Colonic mucosa (tissue), 4 donors: ENCODE measurements at regions of chr1 and their contacts with region 1.

Region 1: DNA sequence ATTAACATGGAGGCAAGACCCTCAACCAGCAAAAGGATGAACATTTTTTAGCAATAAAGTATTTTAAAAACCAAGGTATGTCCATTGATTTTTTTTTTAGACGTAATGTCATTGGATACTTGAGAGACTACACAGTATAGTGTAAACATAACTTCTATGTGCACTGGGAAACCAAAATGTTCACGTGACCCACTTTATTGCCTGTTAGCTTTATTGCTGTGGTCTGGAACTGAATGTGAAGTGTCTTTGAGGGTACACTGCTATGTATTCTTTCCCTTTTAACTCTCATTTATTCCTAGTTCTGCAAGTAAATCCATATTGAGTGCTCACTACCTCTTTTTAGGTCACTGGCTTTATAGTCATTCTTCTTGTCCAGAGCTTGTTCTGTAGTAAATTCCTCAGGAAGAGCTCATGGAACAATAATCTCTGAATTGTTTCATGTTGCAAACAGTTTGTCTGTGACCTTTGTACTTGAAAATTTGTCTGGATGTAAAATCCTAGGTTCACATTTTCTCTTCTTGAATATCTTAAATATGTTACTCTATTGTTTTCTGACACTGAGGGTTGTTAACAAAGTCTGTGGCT is 20.6 kb downstream of the ABCD3 start:
- DNase-seq: peak; percentile 62
- H3K4me3 ChIP-seq: no peak overlapping the region
- H3K27ac ChIP-seq: peak overlapping the region; percentile 35
- H3K4me1 ChIP-seq: peaks cover 8% of the 10 kb centered on the region
- H3K27me3 ChIP-seq: no peaks in the 10 kb centered on the region
- CTCF ChIP-seq: no peak

Region 2: DNA sequence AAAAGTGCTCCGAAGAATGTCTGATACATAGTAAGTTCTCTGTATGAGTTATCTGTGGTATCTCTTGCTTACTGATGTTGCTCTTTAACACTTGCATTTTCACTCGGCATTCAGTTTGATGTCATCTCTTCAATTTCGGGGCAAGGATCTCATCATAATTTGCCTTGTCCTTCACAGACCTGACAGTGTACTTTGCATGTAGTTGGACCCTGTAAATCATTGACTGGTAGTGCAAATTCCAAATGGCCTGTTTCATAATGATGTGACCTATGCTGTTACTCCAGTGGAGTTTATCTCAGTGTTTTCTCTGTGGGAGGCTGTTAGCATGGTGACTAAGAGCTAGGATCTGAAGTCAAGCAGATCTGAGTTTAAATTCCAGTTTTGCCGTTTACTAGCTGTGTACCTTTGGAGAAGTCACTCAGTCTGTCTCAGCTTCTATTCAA is 54.8 kb before region 1 on chr1:
- intact Hi-C with region 1: loop called (anchors 10 kb)
- DNase-seq: peak; percentile 77
- H3K4me3 ChIP-seq: no peak overlapping the region
- H3K27ac ChIP-seq: peak overlapping the region; percentile 74
- H3K4me1 ChIP-seq: no peaks in the 10 kb centered on the region
- H3K27me3 ChIP-seq: no peaks in the 10 kb centered on the region
- CTCF ChIP-seq: no peak